Activated CD4-positive, alpha-beta memory T cell treated with anti-CD3 and anti-CD28 coated beads for 36 hours (primary cell): ENCODE measurements at regions of chr20 and their contacts with region 1.

Region 1: GRCh38 chr20:58870239-58871014 is 17.9 kb downstream of the GNAS start:
- DNase-seq: peak; percentile 64
- H3K4me3 Mint-ChIP-seq: no peak overlapping the region
- H3K27ac Mint-ChIP-seq: no peak overlapping the region
- H3K4me1 Mint-ChIP-seq: peaks cover 9% of the 10 kb centered on the region
- H3K27me3 Mint-ChIP-seq: peaks cover 2% of the 10 kb centered on the region

Region 2: GRCh38 chr20:59403261-59403961 is 533.0 kb after region 1 on chr20:
- CTCF ChIA-PET with region 1: interaction called, 9 read pairs
- POLR2A ChIA-PET with region 1: no interaction called
- intact Hi-C with region 1: loop called (anchors 2 kb)
- DNase-seq: peak; percentile 77
- H3K4me3 Mint-ChIP-seq: peak overlapping the region; percentile 57
- H3K27ac Mint-ChIP-seq: no peak overlapping the region
- H3K4me1 Mint-ChIP-seq: peaks cover 2% of the 10 kb centered on the region
- H3K27me3 Mint-ChIP-seq: peaks cover 14% of the 10 kb centered on the region

Region 3: GRCh38 chr20:59455402-59456341 is 585.2 kb after region 1 on chr20:
- CTCF ChIA-PET with region 1: interaction called, 4 read pairs
- POLR2A ChIA-PET with region 1: no interaction called
- intact Hi-C with region 1: loop called (anchors 1 kb)
- DNase-seq: no peak
- H3K4me3 Mint-ChIP-seq: no peak overlapping the region
- H3K27ac Mint-ChIP-seq: no peak overlapping the region
- H3K4me1 Mint-ChIP-seq: no peaks in the 10 kb centered on the region
- H3K27me3 Mint-ChIP-seq: peaks cover 8% of the 10 kb centered on the region